Activated B cell treated with CpG ODN at 0.5 μM for 24 hours (primary cell): ENCODE measurements at regions of chr20 and their contacts with region 1.

Region 1: GRCh38 chr20:19934792-19935491 is 82.2 kb upstream of the NAA20 start:
- DNase-seq: peak; percentile 30
- ATAC-seq: peak; percentile 67
- H3K4me3 Mint-ChIP-seq: peak overlapping the region; percentile 72
- H3K27ac Mint-ChIP-seq: peak overlapping the region; percentile 71
- H3K4me1 Mint-ChIP-seq: peaks cover 48% of the 10 kb centered on the region
- H3K27me3 Mint-ChIP-seq: no peaks in the 10 kb centered on the region
- CTCF ChIP-seq: no peak

Region 2: DNA sequence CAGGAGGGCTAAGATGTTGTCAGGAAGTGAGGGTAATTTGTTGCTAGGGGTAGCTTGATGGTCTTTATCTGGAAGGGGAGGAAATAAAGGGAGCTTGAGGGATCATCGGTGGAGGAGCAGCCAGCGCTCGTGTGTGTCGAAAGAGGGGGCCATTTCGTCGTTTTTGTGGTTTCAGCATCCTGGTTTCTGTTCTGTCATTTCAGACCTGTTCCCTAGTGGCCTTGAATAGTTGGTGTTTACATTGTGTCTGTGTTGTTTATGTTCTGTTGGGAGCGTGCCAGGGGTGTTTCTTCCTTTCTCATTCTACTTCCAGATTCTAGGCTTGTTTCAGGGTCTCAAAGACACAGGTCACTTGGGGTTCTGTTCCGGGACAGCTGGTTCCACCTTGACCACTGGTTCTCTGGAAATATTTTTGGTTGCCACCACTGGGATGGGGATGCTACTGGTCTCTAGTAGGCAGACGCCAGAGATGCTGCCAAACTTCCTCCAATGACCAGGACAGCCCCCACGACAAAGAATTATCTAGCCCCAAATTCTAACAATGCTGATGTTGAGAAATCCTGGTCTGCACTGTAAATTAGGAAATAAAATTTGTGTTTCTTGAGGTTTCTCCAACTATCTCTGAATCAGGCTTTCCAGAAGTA is 31.7 kb before region 1 on chr20:
- CTCF ChIA-PET with region 1: interaction called, 3 read pairs
- POLR2A ChIA-PET with region 1: no interaction called
- intact Hi-C with region 1: loop called (anchors 2 kb)
- DNase-seq: no peak
- ATAC-seq: peak; percentile 93
- H3K4me3 Mint-ChIP-seq: no peak overlapping the region
- H3K27ac Mint-ChIP-seq: no peak overlapping the region
- H3K4me1 Mint-ChIP-seq: peaks cover 11% of the 10 kb centered on the region
- H3K27me3 Mint-ChIP-seq: peaks cover 13% of the 10 kb centered on the region
- CTCF ChIP-seq: no peak

Region 3: GRCh38 chr20:19909725-19910124 is 25.2 kb before region 1 on chr20:
- CTCF ChIA-PET with region 1: no interaction called
- POLR2A ChIA-PET with region 1: interaction called, 17 read pairs
- intact Hi-C with region 1: no loop called
- DNase-seq: no peak
- ATAC-seq: no peak
- H3K4me3 Mint-ChIP-seq: no peak overlapping the region
- H3K27ac Mint-ChIP-seq: no peak overlapping the region
- H3K4me1 Mint-ChIP-seq: peaks cover 29% of the 10 kb centered on the region
- H3K27me3 Mint-ChIP-seq: no peaks in the 10 kb centered on the region
- CTCF ChIP-seq: no peak

Region 4: DNA sequence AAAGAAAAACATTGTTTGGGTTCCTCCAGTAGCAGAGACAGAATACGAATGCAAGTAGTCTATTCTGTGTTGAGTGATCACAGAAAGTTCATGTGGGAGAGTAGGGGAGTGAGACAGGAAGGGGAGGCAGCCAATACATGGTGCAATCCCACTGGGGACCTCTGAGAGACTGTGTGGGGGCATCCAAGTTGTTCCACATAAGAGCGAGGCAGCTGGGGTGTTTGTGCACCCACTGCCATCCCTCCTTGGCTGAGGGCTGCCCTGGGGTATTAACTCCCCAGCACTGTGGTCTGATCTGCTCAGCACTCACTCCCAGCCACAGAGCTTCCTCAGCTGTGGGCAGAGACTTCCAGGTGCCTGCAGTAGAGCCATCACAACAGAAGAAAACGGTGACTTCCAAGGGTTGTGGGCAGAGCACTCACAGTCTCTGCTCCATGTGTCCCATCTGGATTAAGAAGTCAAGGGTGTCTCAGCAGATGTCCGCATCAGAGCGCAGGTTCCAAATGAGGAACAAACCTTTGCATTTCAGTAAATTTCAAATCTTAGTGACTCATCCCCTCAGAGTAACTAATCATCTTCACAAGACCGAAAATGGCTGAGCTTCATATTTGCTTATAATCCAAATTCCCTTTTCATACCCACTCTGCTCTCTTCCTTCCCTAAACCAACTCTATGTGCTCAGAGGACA is 19.7 kb before region 1 on chr20:
- CTCF ChIA-PET with region 1: interaction called, 3 read pairs
- POLR2A ChIA-PET with region 1: interaction called, 17 read pairs
- intact Hi-C with region 1: loop called (anchors 1 kb)
- DNase-seq: peak; percentile 28
- ATAC-seq: peak; percentile 78
- H3K4me3 Mint-ChIP-seq: peak overlapping the region; percentile 29
- H3K27ac Mint-ChIP-seq: peak overlapping the region; percentile 87
- H3K4me1 Mint-ChIP-seq: peaks cover 65% of the 10 kb centered on the region
- H3K27me3 Mint-ChIP-seq: no peaks in the 10 kb centered on the region
- CTCF ChIP-seq: no peak

Region 5: DNA sequence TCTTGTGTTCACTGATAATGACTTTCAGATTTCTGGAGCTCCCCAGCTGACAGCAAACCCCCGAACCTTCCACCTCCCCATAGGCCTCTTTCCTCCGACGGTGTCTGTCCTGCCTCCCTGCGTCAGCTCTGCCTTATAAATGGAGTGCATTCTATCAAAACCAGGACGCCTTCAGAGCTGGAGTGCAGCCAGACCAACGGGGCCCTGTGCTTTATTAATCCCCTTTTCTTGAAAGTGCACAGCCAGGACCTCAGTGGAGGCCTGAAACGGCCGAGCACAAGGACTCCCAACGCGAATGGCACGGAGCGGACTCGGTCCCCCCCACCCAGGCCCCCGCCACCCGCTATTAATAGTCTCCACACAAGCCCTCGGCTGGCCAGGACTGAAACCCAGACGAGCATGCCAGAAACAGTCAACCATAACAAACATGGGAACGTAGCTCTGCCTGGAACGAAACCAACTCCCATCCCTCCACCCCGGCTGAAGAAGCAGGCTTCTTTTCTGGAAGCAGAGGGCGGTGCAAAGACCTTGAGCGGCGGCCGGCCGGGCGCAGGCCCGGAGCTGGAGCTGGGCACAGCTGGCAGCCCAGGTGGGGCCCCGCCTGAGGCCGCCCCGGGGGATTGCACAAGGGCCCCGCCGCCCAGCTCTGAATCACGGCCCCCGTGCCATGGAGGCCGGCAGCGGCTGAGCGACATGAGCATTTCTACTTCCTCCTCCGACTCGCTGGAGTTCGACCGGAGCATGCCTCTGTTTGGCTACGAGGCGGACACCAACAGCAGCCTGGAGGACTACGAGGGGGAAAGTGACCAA is 39.9 kb after region 1 on chr20:
- CTCF ChIA-PET with region 1: no interaction called
- POLR2A ChIA-PET with region 1: no interaction called
- intact Hi-C with region 1: no loop called
- DNase-seq: no peak
- ATAC-seq: no peak
- H3K4me3 Mint-ChIP-seq: no peak overlapping the region
- H3K27ac Mint-ChIP-seq: no peak overlapping the region
- H3K4me1 Mint-ChIP-seq: peaks cover 2% of the 10 kb centered on the region
- H3K27me3 Mint-ChIP-seq: peaks cover 4% of the 10 kb centered on the region
- CTCF ChIP-seq: no peak